ENCODE measurements at regions of chr11 and their contacts with region 1.

Region 1: DNA sequence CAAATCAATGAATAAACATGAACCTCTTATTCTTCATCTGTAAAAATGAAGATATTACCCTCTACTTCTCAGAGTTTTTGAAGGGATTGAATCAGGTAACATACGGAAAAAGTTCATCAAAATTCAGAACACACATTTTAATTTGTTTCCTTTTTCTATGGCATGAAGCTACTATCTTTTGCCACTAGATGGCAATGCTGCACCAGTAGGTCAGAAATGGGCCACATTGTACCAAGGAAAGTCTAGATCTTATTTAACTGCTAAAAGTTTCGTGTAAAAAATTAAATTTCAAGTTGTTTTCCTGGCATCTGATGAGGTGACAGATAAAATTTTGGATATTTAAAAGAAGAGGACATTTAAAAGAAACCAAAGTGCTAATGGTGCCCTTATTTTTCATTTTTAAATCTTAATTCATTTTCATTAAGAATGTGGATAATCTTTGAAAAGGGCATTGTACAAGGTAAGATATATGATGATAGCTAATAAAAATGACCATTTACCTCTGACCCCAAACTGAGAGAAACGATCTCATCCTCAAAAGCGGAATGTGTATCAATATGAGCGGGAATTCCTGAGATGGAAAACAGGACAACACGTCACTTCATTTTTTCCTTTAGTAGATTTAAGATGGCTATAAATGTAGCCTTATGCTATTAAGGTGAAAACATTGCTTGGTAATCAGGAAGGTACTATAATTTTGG is 16.1 kb downstream of the ALKBH8 start:
- DNase-seq: peak in 7 of 14 experiments; percentile 4 to 69 (median 36)
- ATAC-seq: peak; percentile 67
- H3K4me3 ChIP-seq: no peak overlapping the region
- H3K4me3 Mint-ChIP-seq: no peak overlapping the region
- H3K27ac ChIP-seq: no peak overlapping the region
- H3K27ac Mint-ChIP-seq: no peak overlapping the region
- H3K4me1 ChIP-seq: no peaks in the 10 kb centered on the region
- H3K4me1 Mint-ChIP-seq: peaks cover 4% of the 10 kb centered on the region
- H3K27me3 ChIP-seq: no peaks in the 10 kb centered on the region
- H3K27me3 Mint-ChIP-seq: no peaks in the 10 kb centered on the region
- CTCF ChIP-seq: peak; percentile 92

Region 2: GRCh38 chr11:107538821-107539220 is 10.6 kb before region 1 on chr11:
- CTCF ChIA-PET with region 1: interaction called, 12 read pairs
- POLR2A ChIA-PET with region 1: interaction called, 3 read pairs
- intact Hi-C with region 1: no loop called
- DNase-seq: no peak
- ATAC-seq: no peak
- H3K4me3 ChIP-seq: no peak overlapping the region
- H3K4me3 Mint-ChIP-seq: no peak overlapping the region
- H3K27ac ChIP-seq: no peak overlapping the region
- H3K27ac Mint-ChIP-seq: no peak overlapping the region
- H3K4me1 ChIP-seq: no peaks in the 10 kb centered on the region
- H3K4me1 Mint-ChIP-seq: no peaks in the 10 kb centered on the region
- H3K27me3 ChIP-seq: no peaks in the 10 kb centered on the region
- H3K27me3 Mint-ChIP-seq: no peaks in the 10 kb centered on the region
- CTCF ChIP-seq: no peak

Region 3: GRCh38 chr11:107583629-107584195 is 34.3 kb after region 1 on chr11:
- CTCF ChIA-PET with region 1: no interaction called
- POLR2A ChIA-PET with region 1: no interaction called
- intact Hi-C with region 1: no loop called
- DNase-seq: no peak
- ATAC-seq: no peak
- H3K4me3 ChIP-seq: no peak overlapping the region
- H3K4me3 Mint-ChIP-seq: no peak overlapping the region
- H3K27ac ChIP-seq: no peak overlapping the region
- H3K27ac Mint-ChIP-seq: no peak overlapping the region
- H3K4me1 ChIP-seq: no peaks in the 10 kb centered on the region
- H3K4me1 Mint-ChIP-seq: no peaks in the 10 kb centered on the region
- H3K27me3 ChIP-seq: peaks cover 20 to 30% of the 10 kb centered on the region in 2 experiments
- H3K27me3 Mint-ChIP-seq: peaks cover 71% of the 10 kb centered on the region
- CTCF ChIP-seq: no peak

Region 4: GRCh38 chr11:107689317-107690202 is 140.2 kb after region 1 on chr11:
- CTCF ChIA-PET with region 1: interaction called, 6 read pairs
- POLR2A ChIA-PET with region 1: no interaction called
- intact Hi-C with region 1: loop called (anchors 1 to 2 kb)
- DNase-seq: peak; percentile 13 to 67 (median 42)
- ATAC-seq: peak; percentile 44
- H3K4me3 ChIP-seq: no peak overlapping the region
- H3K4me3 Mint-ChIP-seq: no peak overlapping the region
- H3K27ac ChIP-seq: no peak overlapping the region
- H3K27ac Mint-ChIP-seq: no peak overlapping the region
- H3K4me1 ChIP-seq: no peaks in the 10 kb centered on the region
- H3K4me1 Mint-ChIP-seq: no peaks in the 10 kb centered on the region
- H3K27me3 ChIP-seq: peaks cover 3 to 15% of the 10 kb centered on the region in 2 experiments
- H3K27me3 Mint-ChIP-seq: peaks cover 29% of the 10 kb centered on the region
- CTCF ChIP-seq: peak; percentile 29